Thyroid gland (tissue), 4 donors: ENCODE measurements at regions of chr7 and their contacts with region 1.

Region 1: GRCh38 chr7:47088329-47089067 is 493.4 kb downstream of the TNS3 start:
- DNase-seq: peak; percentile 66 to 68
- H3K4me3 ChIP-seq: no peak overlapping the region
- H3K27ac ChIP-seq: no peak overlapping the region
- H3K4me1 ChIP-seq: peaks cover 9 to 15% of the 10 kb centered on the region in 2 donors
- H3K27me3 ChIP-seq: no peaks in the 10 kb centered on the region
- CTCF ChIP-seq: peak; percentile 79 to 91 (median 88)
- POLR2A ChIP-seq: no peak

Region 2: DNA sequence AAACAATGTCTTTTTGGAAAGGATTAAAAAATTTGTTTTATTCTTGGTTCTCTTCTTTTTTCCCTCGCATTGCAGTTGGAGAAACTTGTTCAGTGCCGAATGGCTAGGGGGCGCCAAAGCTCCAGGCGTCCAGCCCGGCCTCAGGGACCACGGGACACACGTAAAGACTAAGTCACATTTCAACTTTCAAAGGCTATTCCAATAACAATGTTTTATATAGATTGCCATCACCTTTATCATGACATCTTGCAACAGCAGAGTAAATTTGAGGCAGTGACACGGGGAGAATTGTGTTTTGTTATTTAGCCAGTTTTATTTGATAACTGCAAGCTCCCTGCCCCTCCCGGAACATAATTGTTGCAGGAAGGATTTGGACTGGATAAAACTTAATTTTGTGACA is 1165.2 kb before region 1 on chr7:
- intact Hi-C with region 1: loop called (anchors 5 kb)
- DNase-seq: peak; percentile 71 to 83
- H3K4me3 ChIP-seq: no peak overlapping the region
- H3K27ac ChIP-seq: no peak overlapping the region
- H3K4me1 ChIP-seq: peaks cover 14 to 35% of the 10 kb centered on the region in 2 donors
- H3K27me3 ChIP-seq: no peaks in the 10 kb centered on the region
- CTCF ChIP-seq: peak; percentile 68 to 92 (median 77)
- POLR2A ChIP-seq: no peak

Region 3: DNA sequence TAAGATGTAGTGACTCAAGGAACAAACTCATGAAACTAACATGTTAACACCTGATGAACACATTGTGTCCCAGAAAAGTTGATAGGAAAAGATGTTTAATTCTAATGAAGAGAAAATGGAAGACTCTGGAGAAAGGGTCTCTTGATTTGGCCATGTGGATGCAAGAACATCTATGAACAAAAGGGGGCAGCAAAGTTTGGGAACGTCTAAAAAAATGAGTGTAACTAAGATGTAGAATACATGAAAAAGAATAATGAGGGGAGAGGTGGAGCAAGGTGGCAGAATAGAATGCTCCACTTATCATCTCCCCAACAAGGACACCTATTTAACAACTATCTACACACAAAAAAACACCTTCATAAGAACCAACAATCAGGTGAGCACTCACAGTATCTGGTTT is 311.7 kb before region 1 on chr7:
- intact Hi-C with region 1: loop called (anchors 5 kb)
- DNase-seq: no peak
- H3K4me3 ChIP-seq: no peak overlapping the region
- H3K27ac ChIP-seq: no peak overlapping the region
- H3K4me1 ChIP-seq: peaks cover 0 to 4% of the 10 kb centered on the region in 2 donors
- H3K27me3 ChIP-seq: no peaks in the 10 kb centered on the region
- CTCF ChIP-seq: peak in 4 of 6 experiments; percentile 46 to 66 (median 56)
- POLR2A ChIP-seq: no peak